Ovary (tissue), 10 donors: ENCODE measurements at regions of chr6 and their contacts with region 1.

Region 1: DNA sequence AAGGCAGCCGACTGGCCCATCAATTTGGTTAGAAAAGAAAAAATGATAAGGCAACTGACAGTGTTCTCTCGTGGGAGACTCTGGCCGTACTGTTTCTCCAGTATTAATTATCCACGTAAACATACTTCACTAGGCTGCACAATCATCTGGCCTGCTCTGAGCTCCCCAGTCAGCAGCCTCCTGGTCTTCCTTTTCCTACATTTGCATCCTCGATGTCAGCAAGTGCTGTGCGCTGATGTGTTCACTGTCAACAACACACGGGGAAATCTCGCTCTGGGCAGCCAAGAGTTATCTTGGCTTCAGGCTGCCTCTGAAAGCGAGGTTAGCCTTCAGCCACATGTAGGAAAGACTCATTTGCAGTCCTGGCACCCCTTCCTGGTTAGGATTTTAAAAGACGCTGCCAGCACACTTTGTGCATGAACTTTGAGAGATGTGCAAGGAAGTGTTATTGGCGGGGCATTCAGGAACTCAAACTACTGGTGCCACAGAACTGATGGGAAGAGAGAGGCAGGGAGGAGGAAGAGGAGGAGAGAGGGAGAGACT is 460.5 kb upstream of the ARID1B start:
- DNase-seq: no peak
- H3K4me3 ChIP-seq: no peak overlapping the region
- H3K27ac ChIP-seq: no peak overlapping the region
- H3K4me1 ChIP-seq: no peaks in the 10 kb centered on the region
- H3K27me3 ChIP-seq: no peaks in the 10 kb centered on the region
- CTCF ChIP-seq: no peak
- EP300 ChIP-seq: no peak
- POLR2A ChIP-seq: no peak

Region 2: GRCh38 chr6:154763650-154764049 is 1553.0 kb before region 1 on chr6:
- intact Hi-C with region 1: loop called in 1 of 4 experiments (anchors 5 kb)
- DNase-seq: no peak
- H3K4me3 ChIP-seq: no peak overlapping the region
- H3K27ac ChIP-seq: no peak overlapping the region
- H3K4me1 ChIP-seq: peaks cover 8% of the 10 kb centered on the region
- H3K27me3 ChIP-seq: no peaks in the 10 kb centered on the region
- CTCF ChIP-seq: no peak
- EP300 ChIP-seq: no peak
- POLR2A ChIP-seq: no peak